Left colon (tissue), 2 donors: ENCODE measurements at regions of chr1 and their contacts with region 1.

Region 1: GRCh38 chr1:228744918-228745317 is 9.6 kb downstream of the RHOU start:
- DNase-seq: no peak
- ATAC-seq: peak; percentile 21

Region 2: GRCh38 chr1:228717081-228717480 is 27.8 kb before region 1 on chr1:
- intact Hi-C with region 1: no loop called
- DNase-seq: no peak
- ATAC-seq: no peak

Region 3: GRCh38 chr1:228794173-228794572 is 49.3 kb after region 1 on chr1:
- intact Hi-C with region 1: loop called in 1 of 2 experiments (anchors 2 kb)
- DNase-seq: no peak
- ATAC-seq: no peak